ENCODE measurements at regions of chr2 and their contacts with region 1.

Region 1: DNA sequence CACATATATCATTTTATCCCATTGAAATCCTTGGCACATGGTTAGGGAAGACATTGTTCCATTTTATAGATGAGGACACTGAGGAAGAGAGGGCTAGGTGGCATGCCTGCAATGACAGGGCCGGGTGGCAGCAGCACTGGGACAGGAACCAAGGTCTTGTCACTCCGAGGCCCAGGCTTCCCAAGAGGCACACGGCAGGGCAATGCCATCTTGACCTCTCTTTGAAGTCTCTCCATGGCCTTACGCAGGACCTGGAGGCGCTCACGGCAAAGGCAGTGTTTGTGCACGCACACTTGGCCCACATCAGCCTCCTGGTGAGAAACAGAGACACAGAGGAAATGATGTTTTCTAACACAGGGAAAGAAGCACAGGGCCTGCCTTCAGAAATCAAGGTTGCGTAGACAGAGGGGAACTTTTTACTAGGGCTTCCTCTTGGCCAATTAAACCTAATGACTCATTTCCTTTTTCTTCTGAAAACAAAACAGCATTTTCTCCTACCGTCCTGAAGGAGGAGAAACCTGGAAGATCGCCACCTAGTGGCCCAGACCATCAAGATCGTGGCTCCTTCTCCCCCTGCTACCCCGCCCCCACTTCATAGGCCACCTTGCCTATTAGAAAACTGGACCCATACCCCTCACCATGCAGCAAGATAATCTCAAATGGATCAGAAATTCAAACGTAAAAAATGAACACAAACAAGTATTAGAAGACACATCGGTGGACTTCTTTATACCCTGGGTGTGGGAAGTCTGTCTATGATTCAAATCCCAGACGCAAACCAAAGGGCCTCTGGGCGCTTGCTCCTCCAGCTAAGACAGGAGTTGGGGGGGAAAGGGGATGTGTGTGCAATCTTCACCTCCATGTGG is 74.6 kb upstream of the SP3 start:
- DNase-seq: peak; percentile 97
- ATAC-seq: peak; percentile 85
- H3K4me3 ChIP-seq: peak overlapping the region; percentile 4; the same call in 1 of the 2 replicates
- H3K27ac ChIP-seq: peak overlapping the region; percentile 91
- H3K4me1 ChIP-seq: peaks cover 24% of the 10 kb centered on the region
- H3K27me3 ChIP-seq: no peaks in the 10 kb centered on the region
- CTCF ChIP-seq: peak; percentile 91

Region 2: GRCh38 chr2:173884025-173884802 is 155.6 kb before region 1 on chr2:
- CTCF ChIA-PET with region 1: no interaction called
- POLR2A ChIA-PET with region 1: no interaction called
- intact Hi-C with region 1: loop called (anchors 10 kb)
- DNase-seq: peak; percentile 78
- ATAC-seq: peak; percentile 91
- H3K4me3 ChIP-seq: no peak overlapping the region
- H3K27ac ChIP-seq: no peak overlapping the region
- H3K4me1 ChIP-seq: peaks cover 6% of the 10 kb centered on the region; the same call in 1 of the 2 replicates
- H3K27me3 ChIP-seq: no peaks in the 10 kb centered on the region
- CTCF ChIP-seq: peak; percentile 83

Region 3: GRCh38 chr2:173972603-173973002 is 67.2 kb before region 1 on chr2:
- CTCF ChIA-PET with region 1: no interaction called
- POLR2A ChIA-PET with region 1: no interaction called
- intact Hi-C with region 1: loop called (anchors 1 kb)
- DNase-seq: peak; percentile 95
- ATAC-seq: peak; percentile 95
- H3K4me3 ChIP-seq: no peak overlapping the region
- H3K27ac ChIP-seq: peak overlapping the region; percentile 76
- H3K4me1 ChIP-seq: peaks cover 33% of the 10 kb centered on the region
- H3K27me3 ChIP-seq: no peaks in the 10 kb centered on the region
- CTCF ChIP-seq: no peak

Region 4: DNA sequence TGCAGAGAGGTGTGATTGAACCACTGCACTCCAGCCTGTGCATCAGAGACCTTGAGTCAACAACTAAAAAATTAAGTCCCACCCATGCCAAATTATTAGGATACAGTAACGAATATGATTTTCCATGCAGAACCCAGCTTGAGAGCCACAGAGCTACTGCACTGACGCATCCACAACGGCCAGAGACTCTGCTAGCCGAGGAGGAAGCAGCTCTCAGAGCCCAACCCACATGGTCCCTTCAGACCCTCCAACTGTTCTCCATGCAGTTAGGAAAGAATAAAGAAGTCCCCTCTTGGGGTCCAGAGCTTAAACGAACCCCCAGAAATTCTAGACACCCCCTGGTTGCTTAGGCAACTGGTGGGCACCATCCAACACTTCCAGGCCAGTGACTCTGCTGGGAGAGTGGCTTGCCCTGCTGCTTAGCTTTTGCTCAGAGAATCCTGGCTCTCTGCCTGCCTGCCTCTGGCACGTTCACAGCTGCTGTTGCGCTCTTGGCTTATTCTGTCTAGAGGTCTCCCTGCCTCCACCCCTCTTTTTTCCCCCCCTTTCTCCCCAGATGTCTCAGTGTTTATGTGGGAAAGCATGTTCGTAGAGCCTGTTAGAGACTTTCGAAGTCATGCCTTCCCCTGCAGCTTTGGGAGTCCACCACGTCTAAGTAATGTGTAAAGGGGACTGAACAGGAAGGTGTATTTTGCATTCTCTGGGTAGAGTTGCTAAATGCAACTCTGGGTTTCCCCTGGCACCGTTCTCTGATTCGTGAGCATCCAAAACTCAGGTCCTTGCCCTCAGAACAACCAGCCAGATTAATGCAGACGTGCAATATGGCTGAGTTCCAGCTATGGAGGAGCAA is 48.6 kb before region 1 on chr2:
- CTCF ChIA-PET with region 1: interaction called, 11 read pairs
- POLR2A ChIA-PET with region 1: no interaction called
- intact Hi-C with region 1: no loop called
- DNase-seq: peak; percentile 43
- ATAC-seq: no peak
- H3K4me3 ChIP-seq: no peak overlapping the region
- H3K27ac ChIP-seq: peak overlapping the region; percentile 79
- H3K4me1 ChIP-seq: peaks cover 19% of the 10 kb centered on the region
- H3K27me3 ChIP-seq: no peaks in the 10 kb centered on the region
- CTCF ChIP-seq: no peak

Region 5: DNA sequence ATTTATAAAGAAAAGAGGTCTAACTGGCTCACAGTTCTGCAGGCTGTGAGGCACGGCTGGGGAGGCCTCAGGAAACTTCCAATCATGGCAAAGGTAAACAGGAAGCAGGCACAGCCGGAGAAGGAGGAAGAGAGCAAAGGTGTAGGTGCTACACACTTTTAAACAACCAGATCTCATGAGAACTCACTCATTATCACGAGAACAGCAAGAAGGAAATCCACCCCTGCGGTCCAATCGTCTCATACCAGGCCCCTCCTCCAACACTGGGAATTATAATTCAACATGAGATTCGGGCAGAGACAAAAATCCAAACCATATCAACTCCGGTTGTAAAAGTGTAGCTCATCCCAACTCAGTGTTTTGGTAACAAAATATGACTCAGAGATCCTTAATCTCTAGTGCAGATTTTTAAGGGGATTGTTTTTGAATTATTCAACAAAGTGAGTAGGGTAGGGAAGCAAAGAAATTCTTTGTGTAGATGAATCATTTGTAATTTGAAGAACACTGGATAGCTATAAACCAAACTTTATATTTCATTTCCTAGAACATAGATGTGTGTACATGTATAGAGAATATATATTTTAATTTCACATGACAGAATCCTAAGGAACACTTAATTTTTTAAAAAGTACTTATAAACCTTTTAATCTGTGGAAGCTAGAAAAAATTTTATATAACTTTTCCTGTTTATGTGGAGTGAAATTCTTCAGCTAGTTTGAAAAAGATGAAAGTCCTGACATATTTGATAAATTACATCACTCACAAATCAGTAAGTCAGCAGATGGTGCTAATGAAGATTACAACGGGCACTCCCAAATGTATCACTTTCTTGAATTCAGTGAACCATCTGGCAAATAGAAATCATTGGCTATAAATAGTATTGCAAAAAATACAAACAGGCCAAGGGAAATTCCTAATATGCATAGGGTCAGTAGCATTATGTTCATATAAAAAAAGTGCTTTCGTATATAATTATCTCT is 78.5 kb after region 1 on chr2:
- CTCF ChIA-PET with region 1: no interaction called
- POLR2A ChIA-PET with region 1: no interaction called
- intact Hi-C with region 1: loop called (anchors 5 kb)
- DNase-seq: peak; percentile 91
- ATAC-seq: peak; percentile 71
- H3K4me3 ChIP-seq: peak overlapping the region; percentile 37
- H3K27ac ChIP-seq: peak overlapping the region; percentile 96
- H3K4me1 ChIP-seq: peaks cover 66% of the 10 kb centered on the region
- H3K27me3 ChIP-seq: no peaks in the 10 kb centered on the region
- CTCF ChIP-seq: no peak

Measured in PC-3 (cell line).